Sciatic nerve (tissue), 2 donors: ENCODE measurements at regions of chr2 and their contacts with region 1.

Region 1: GRCh38 chr2:219642465-219643080 is 15.1 kb downstream of the SLC4A3 start:
- DNase-seq: peak; percentile 99
- ATAC-seq: peak; percentile 96

Region 2: GRCh38 chr2:219543601-219544358 is 98.8 kb before region 1 on chr2 and contains the starts of genes CHPF and TMEM198:
- intact Hi-C with region 1: loop called (anchors 5 kb)
- DNase-seq: peak; percentile 99
- ATAC-seq: peak; percentile 98
- total RNA-seq, gene CHPF: 33.4 TPM
- total RNA-seq, gene TMEM198: 2.1 TPM